Colonic mucosa (tissue), 4 donors: ENCODE measurements at regions of chr5 and their contacts with region 1.

Region 1: DNA sequence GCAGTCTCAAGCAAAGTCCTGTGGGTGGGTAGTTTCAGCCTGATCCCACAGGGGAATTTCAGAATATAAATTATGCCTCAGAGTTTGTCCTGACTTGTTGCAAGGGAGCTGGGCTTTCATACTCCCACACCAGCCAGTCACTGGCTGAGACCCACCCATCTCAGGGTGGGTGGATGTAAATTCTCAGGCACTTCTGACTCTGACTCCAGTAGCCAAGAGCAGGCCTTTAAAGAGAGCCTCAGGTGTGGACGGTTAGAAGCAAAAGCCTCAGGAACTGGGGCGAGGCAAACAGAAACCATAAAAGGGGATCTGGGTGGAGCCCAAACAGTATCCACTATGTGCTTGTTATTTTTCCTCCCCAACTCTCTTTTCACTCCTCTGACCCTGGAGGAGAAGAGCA is 28.6 kb upstream of the FBXW11 start:
- DNase-seq: no peak
- H3K4me3 ChIP-seq: no peak overlapping the region
- H3K27ac ChIP-seq: no peak overlapping the region
- H3K4me1 ChIP-seq: no peaks in the 10 kb centered on the region
- H3K27me3 ChIP-seq: no peaks in the 10 kb centered on the region
- CTCF ChIP-seq: no peak

Region 2: DNA sequence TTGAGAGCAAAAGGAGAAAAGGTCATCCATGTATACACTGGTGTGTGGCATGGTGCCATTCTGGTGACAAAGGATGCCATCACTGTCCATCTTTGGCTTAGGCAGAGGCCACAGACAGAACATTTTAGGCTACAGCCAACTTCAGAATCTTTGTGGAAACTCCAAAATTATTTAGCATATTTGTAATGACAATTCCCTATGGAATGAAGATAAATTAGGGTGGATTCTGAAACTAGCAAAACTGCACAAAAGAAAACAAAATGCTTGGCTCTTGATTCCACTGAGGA is 121.1 kb before region 1 on chr5:
- intact Hi-C with region 1: loop called (anchors 2 kb)
- DNase-seq: no peak
- H3K4me3 ChIP-seq: no peak overlapping the region
- H3K27ac ChIP-seq: no peak overlapping the region
- H3K4me1 ChIP-seq: no peaks in the 10 kb centered on the region
- H3K27me3 ChIP-seq: no peaks in the 10 kb centered on the region
- CTCF ChIP-seq: no peak